ENCODE measurements at regions of chr12 and their contacts with region 1.

Region 1: DNA sequence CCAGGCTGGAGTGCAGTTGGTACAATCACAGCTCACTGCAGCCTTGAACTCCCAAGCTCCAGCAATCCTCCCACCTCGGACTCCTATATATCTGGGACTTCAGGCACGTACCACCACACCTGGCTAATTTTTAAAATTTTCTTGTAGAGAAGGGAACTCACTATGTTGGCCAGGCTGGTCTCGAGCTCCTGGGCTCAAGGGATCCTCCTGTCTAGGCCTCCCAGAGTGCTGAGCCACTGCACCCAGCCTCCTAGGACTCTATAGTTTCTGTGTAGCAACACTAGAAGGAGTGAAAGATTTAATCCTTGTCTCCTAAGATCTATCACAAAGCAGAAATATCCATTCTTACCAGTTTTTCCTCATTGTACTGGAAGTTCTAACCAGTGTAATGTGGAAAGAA is 4.3 kb upstream of the APOF start:
- DNase-seq: no peak
- ATAC-seq: no peak
- H3K4me3 ChIP-seq: no peak overlapping the region
- H3K4me3 Mint-ChIP-seq: no peak overlapping the region
- H3K27ac ChIP-seq: no peak overlapping the region
- H3K27ac Mint-ChIP-seq: no peak overlapping the region
- H3K4me1 ChIP-seq: no peaks in the 10 kb centered on the region
- H3K4me1 Mint-ChIP-seq: peaks cover 2% of the 10 kb centered on the region
- H3K27me3 ChIP-seq: no peaks in the 10 kb centered on the region
- H3K27me3 Mint-ChIP-seq: no peaks in the 10 kb centered on the region
- CTCF ChIP-seq: no peak

Region 2: GRCh38 chr12:55420307-55420962 is 946.5 kb before region 1 on chr12:
- CTCF ChIA-PET with region 1: no interaction called
- POLR2A ChIA-PET with region 1: no interaction called
- intact Hi-C with region 1: no loop called
- DNase-seq: no peak
- ATAC-seq: no peak
- H3K4me3 ChIP-seq: no peak overlapping the region
- H3K4me3 Mint-ChIP-seq: no peak overlapping the region
- H3K27ac ChIP-seq: no peak overlapping the region
- H3K27ac Mint-ChIP-seq: no peak overlapping the region
- H3K4me1 ChIP-seq: no peaks in the 10 kb centered on the region
- H3K4me1 Mint-ChIP-seq: peaks cover 3% of the 10 kb centered on the region
- H3K27me3 ChIP-seq: peaks cover 0 to 16% (median 5%) of the 10 kb centered on the region in 4 experiments
- H3K27me3 Mint-ChIP-seq: peaks cover 42% of the 10 kb centered on the region
- CTCF ChIP-seq: no peak

Region 3: GRCh38 chr12:56348776-56349175 is 18.2 kb before region 1 on chr12:
- CTCF ChIA-PET with region 1: no interaction called
- POLR2A ChIA-PET with region 1: interaction called, 10 read pairs
- intact Hi-C with region 1: no loop called
- DNase-seq: no peak
- ATAC-seq: no peak
- H3K4me3 ChIP-seq: no peak overlapping the region
- H3K4me3 Mint-ChIP-seq: no peak overlapping the region
- H3K27ac ChIP-seq: no peak overlapping the region
- H3K27ac Mint-ChIP-seq: no peak overlapping the region
- H3K4me1 ChIP-seq: no peaks in the 10 kb centered on the region
- H3K4me1 Mint-ChIP-seq: no peaks in the 10 kb centered on the region
- H3K27me3 ChIP-seq: no peaks in the 10 kb centered on the region
- H3K27me3 Mint-ChIP-seq: no peaks in the 10 kb centered on the region
- CTCF ChIP-seq: no peak

Region 4: DNA sequence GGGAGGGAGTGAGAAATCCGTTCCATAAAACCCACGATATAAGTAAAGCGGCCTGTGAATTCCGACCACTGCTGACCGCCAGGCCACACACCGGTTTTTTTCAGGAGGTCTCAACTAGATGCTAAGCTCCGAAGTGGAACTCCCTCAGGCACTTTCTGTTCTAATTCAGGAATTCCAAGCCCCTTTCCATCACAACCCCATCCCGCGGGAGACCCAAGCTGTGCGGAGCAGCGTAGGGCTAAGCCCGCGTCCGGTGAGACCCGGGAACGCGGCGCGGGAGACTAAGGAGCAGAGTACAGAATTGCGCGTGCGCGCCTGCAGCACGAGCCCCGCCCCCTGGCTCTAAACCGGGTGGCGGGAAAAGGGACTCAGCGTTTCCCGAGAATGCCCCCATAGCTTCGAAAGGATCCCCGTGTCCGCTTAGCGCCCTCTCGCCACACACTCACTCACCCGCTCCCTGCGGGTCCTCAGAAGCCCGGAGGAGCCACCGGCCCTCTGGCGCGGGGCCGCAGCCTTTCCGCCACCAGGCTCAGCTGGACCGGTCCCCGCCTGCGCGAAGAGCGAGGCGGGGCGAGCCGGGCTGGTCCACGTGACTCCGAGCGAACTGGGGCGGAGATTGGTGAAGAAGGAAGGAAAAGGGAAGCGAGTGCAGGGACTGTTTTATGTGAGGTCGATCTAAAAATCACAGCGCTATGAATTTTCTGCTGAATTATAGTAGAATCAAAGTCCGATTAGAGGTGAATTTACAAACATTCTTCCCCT is 82.1 kb after region 1 on chr12 and contains the start of gene TIMELESS:
- CTCF ChIA-PET with region 1: no interaction called
- POLR2A ChIA-PET with region 1: no interaction called
- intact Hi-C with region 1: no loop called
- DNase-seq: peak; percentile 95
- ATAC-seq: peak; percentile 96
- H3K4me3 ChIP-seq: peak within 1 kb of the TSS; percentile 69 to 98 (median 83)
- H3K4me3 Mint-ChIP-seq: peak within 1 kb of the TSS; percentile 90
- H3K27ac ChIP-seq: peak within 1 kb of the TSS; percentile 53 to 85
- H3K27ac Mint-ChIP-seq: peak within 1 kb of the TSS; percentile 92
- H3K4me1 ChIP-seq: peaks cover 10 to 12% of the 10 kb centered on the region in 2 donors
- H3K4me1 Mint-ChIP-seq: peaks cover 23% of the 10 kb centered on the region
- H3K27me3 ChIP-seq: no peaks in the 10 kb centered on the region
- H3K27me3 Mint-ChIP-seq: no peaks in the 10 kb centered on the region
- CTCF ChIP-seq: no peak
- total RNA-seq, gene TIMELESS: 44.4 and 46.6 TPM in 2 replicates

Region 5: DNA sequence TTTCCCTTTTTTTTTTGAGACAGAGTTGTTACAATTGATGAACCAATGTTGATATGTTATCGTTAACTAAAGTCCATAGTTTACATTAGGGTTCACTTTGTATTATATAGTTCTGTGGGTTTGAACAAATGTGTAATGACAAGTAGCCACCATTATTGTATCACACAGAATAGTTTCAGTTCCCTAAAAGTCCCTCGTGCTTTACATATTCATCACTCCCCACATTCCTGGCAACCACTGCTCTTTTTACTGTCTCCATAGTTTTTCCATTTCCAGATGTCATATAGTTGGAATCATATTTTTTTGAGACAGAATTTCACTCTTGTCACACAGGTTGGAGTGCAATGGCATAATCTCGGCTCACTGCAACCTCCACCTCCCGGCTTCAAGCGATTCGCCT is 408.7 kb after region 1 on chr12:
- CTCF ChIA-PET with region 1: no interaction called
- POLR2A ChIA-PET with region 1: no interaction called
- intact Hi-C with region 1: no loop called
- DNase-seq: peak; percentile 52
- ATAC-seq: no peak
- H3K4me3 ChIP-seq: no peak overlapping the region
- H3K4me3 Mint-ChIP-seq: no peak overlapping the region
- H3K27ac ChIP-seq: no peak overlapping the region
- H3K27ac Mint-ChIP-seq: peak overlapping the region; percentile 37
- H3K4me1 ChIP-seq: peaks cover 3 to 4% of the 10 kb centered on the region in 2 donors
- H3K4me1 Mint-ChIP-seq: peaks cover 12% of the 10 kb centered on the region
- H3K27me3 ChIP-seq: no peaks in the 10 kb centered on the region
- H3K27me3 Mint-ChIP-seq: no peaks in the 10 kb centered on the region
- CTCF ChIP-seq: no peak